ENCODE measurements at regions of chr18 and their contacts with region 1.

Region 1: DNA sequence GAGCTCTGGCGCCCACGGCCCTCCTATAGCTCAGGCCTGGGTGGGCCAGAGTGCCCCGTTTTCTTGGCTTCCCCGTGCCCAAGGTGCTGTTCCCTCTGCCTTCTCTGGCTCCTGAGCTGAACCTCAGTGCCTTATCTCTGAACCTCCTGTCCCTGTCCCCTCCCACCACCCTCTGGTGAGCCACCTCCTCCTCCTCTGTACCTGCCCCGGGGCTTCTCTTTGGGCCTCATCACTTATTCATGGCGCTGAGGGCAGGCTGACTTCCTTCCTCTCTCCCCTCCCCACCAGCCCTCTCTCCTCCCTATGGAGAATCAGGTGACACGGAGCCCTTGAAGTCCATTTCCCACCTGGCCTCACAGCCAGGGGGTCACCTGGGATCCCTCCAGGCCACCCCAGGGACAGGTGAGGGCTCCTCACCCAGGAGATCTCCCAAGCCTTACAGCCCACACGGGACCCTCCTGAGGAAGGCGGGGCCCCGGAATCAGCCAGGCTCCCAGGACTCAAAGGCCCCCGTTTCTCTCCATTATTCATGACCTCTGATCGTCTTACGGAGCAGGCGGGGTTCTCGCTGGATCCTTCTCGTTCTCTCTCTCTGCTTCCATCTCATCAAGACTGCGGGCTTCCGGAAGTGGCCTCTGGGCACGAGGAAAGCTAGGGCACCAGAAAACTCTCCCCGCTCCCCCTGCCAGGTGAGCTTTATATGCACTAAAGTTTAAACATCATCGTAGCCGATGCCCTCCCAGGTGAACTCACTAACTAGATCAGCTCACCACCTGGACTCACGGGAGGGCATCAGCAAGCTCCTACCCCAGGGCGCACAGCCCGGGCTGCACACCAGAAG is at the start of gene LOXHD1:
- DNase-seq: peak; percentile 54
- H3K4me3 ChIP-seq: no peak within 1 kb of the TSS
- H3K27ac ChIP-seq: no peak within 1 kb of the TSS
- H3K4me1 ChIP-seq: peaks cover 0 to 5% (median 2%) of the 10 kb centered on the region in 6 donors
- H3K27me3 ChIP-seq: no peaks in the 10 kb centered on the region
- CTCF ChIP-seq: no peak
- POLR2A ChIP-seq: no peak
- total RNA-seq, gene LOXHD1: 1.9 to 6.0 (median 2.4) TPM

Region 2: DNA sequence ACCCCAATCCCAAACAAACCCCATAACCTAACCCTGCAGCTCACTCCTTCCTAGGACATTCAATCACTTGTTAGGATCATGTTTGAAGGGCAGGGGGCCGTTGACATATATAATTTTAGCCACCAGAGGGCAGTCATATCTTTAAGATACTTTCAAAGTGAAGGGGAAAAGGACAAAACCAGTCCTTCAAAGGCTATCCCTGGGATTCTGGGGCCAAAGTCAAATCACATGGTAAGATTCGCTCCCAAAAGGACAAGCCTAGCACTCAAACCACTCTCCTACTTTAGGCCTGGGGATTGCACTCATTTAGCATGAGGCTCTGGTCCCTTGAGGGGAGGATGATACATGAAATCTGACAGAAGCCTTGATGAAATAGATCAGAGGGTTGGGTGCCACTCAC is 508.5 kb before region 1 on chr18:
- intact Hi-C with region 1: loop called (anchors 5 kb)
- DNase-seq: no peak
- H3K4me3 ChIP-seq: no peak overlapping the region
- H3K27ac ChIP-seq: no peak overlapping the region
- H3K4me1 ChIP-seq: peaks cover 0 to 14% (median 0%) of the 10 kb centered on the region in 6 donors
- H3K27me3 ChIP-seq: no peaks in the 10 kb centered on the region
- CTCF ChIP-seq: peak; percentile 43 to 80 (median 70)
- POLR2A ChIP-seq: no peak

Region 3: DNA sequence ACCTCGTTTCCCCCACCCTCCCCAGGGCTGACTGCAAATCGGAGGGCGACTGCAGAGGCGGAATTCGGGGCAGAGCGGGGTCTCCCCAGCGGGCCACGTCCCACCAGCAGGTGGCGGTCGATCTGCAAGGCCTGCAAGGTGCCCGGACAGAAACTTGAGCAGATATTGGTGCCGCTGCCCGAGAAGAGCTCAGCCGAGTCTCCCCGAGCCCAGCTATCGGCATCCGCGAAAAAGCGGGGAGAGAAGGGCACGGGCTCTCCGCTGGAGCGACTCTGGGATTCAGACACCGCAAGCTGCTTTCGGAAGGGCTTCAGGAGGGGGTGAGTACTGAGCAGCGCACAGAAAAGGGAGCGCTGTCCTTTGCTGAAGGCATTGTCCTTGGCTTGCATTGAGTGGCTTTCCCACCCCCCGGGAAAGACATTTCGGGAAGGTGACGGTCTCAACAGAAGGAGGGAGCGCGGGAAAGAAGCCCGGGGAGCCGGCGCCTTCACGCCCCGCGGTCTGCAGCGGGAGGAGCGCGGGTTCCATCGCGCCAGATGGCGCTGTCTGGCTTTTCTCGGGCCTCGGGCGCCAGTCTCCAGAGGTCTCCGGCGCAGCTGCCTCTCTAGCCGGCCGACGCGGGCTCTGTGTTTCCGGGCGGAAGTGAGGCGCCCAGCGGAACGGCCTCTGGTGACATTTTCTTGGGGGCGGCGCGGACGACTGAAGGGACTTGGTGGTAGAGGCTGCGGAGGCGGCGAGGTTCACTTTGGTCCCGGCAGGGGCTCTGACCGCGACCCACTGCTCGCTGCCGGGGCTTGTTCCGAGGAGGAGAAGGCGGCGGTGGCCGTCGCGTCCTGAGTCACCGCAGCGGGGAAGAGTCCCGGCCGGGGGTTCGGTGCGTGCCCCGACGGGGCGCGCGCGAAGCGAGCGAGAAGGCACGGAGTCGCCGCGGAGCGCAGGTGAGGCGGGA is 483.7 kb before region 1 on chr18:
- intact Hi-C with region 1: loop called (anchors 10 kb)
- DNase-seq: peak; percentile 99
- H3K4me3 ChIP-seq: peak overlapping the region; percentile 82 to 96 (median 92)
- H3K27ac ChIP-seq: peak overlapping the region; percentile 84 to 96 (median 93)
- H3K4me1 ChIP-seq: peaks cover 15 to 52% (median 46%) of the 10 kb centered on the region in 6 donors
- H3K27me3 ChIP-seq: no peaks in the 10 kb centered on the region
- CTCF ChIP-seq: peak; percentile 66 to 93 (median 85)
- POLR2A ChIP-seq: peak in 1 of 3 donors; percentile 45

Region 4: GRCh38 chr18:46281185-46282176 is 375.9 kb before region 1 on chr18:
- intact Hi-C with region 1: loop called (anchors 5 kb)
- DNase-seq: peak; percentile 86
- H3K4me3 ChIP-seq: no peak overlapping the region
- H3K27ac ChIP-seq: no peak overlapping the region
- H3K4me1 ChIP-seq: peaks cover 5 to 24% (median 14%) of the 10 kb centered on the region in 6 donors
- H3K27me3 ChIP-seq: no peaks in the 10 kb centered on the region
- CTCF ChIP-seq: peak; percentile 62 to 93 (median 87)
- POLR2A ChIP-seq: no peak

Region 5: GRCh38 chr18:46555724-46556123 is 101.6 kb before region 1 on chr18:
- intact Hi-C with region 1: loop called (anchors 10 kb)
- DNase-seq: no peak
- H3K4me3 ChIP-seq: no peak overlapping the region
- H3K27ac ChIP-seq: no peak overlapping the region
- H3K4me1 ChIP-seq: no peaks in the 10 kb centered on the region
- H3K27me3 ChIP-seq: no peaks in the 10 kb centered on the region
- CTCF ChIP-seq: peak in 10 of 11 experiments; percentile 17 to 72 (median 58)
- POLR2A ChIP-seq: no peak

Region 6: GRCh38 chr18:46793565-46793964 is 136.2 kb after region 1 on chr18:
- intact Hi-C with region 1: no loop called
- DNase-seq: no peak
- H3K4me3 ChIP-seq: no peak overlapping the region
- H3K27ac ChIP-seq: no peak overlapping the region
- H3K4me1 ChIP-seq: no peaks in the 10 kb centered on the region
- H3K27me3 ChIP-seq: no peaks in the 10 kb centered on the region
- CTCF ChIP-seq: no peak
- POLR2A ChIP-seq: no peak

Measured in spleen (tissue), 13 donors.